ENCODE measurements at regions of chrX and their contacts with region 1.

Region 1: GRCh38 chrX:110853610-110854009 is 58.0 kb upstream of the CHRDL1 start:
- DNase-seq: no peak

Region 2: GRCh38 chrX:110163488-110163887 is 690.1 kb before region 1 on chrX:
- intact Hi-C with region 1: loop called (anchors 5 kb)
- DNase-seq: no peak

Region 3: GRCh38 chrX:110327336-110327735 is 526.3 kb before region 1 on chrX:
- intact Hi-C with region 1: no loop called
- DNase-seq: no peak

Region 4: DNA sequence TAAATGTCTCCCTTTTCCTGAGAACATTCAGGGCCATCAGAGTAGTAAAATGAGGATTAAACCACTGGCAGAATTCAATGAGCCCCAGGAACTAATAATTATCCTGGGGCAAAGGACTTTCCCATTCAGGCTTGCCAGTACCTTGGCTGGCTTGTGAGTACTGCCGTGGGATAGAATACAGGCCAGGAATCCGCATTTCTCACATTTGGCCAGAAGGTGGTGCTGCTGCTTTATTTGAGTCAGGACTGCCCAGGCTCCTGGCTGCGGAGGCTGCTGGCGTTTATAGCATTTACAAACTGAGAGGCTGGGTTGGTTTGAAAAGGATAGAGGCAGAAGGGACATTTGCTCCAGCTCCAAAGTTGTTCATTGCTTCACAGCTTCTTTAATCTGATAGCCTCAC is 403.6 kb before region 1 on chrX:
- intact Hi-C with region 1: loop called (anchors 2 kb)
- DNase-seq: peak; percentile 82